Caco-2 (cell line): ENCODE measurements at regions of chr6 and their contacts with region 1.

Region 1: GRCh38 chr6:3419624-3420272 is 37.1 kb downstream of the SLC22A23 start:
- DNase-seq: peak; percentile 69
- H3K4me3 ChIP-seq: no peak overlapping the region
- H3K4me3 Mint-ChIP-seq: peak overlapping the region; percentile 63
- H3K27ac Mint-ChIP-seq: peak overlapping the region; percentile 98
- H3K4me1 ChIP-seq: peaks cover 84% of the 10 kb centered on the region
- H3K4me1 Mint-ChIP-seq: peaks cover 61% of the 10 kb centered on the region
- H3K27me3 ChIP-seq: no peaks in the 10 kb centered on the region
- H3K27me3 Mint-ChIP-seq: no peaks in the 10 kb centered on the region
- CTCF ChIP-seq: no peak

Region 2: GRCh38 chr6:3363296-3364025 is 56.3 kb before region 1 on chr6:
- CTCF ChIA-PET with region 1: no interaction called
- POLR2A ChIA-PET with region 1: no interaction called
- intact Hi-C with region 1: no loop called
- DNase-seq: no peak
- H3K4me3 ChIP-seq: no peak overlapping the region
- H3K4me3 Mint-ChIP-seq: no peak overlapping the region
- H3K27ac Mint-ChIP-seq: peak overlapping the region; percentile 39
- H3K4me1 ChIP-seq: peaks cover 12% of the 10 kb centered on the region; the same call in 1 of the 2 replicates
- H3K4me1 Mint-ChIP-seq: peaks cover 19% of the 10 kb centered on the region
- H3K27me3 ChIP-seq: no peaks in the 10 kb centered on the region
- H3K27me3 Mint-ChIP-seq: no peaks in the 10 kb centered on the region
- CTCF ChIP-seq: no peak

Region 3: GRCh38 chr6:3403238-3404173 is 16.2 kb before region 1 on chr6:
- CTCF ChIA-PET with region 1: interaction called, 5 read pairs
- POLR2A ChIA-PET with region 1: interaction called, 7 read pairs
- intact Hi-C with region 1: loop called (anchors 1 kb)
- DNase-seq: peak; percentile 92 to 95
- H3K4me3 ChIP-seq: no peak overlapping the region
- H3K4me3 Mint-ChIP-seq: peak overlapping the region; percentile 63
- H3K27ac Mint-ChIP-seq: peak overlapping the region; percentile 88
- H3K4me1 ChIP-seq: peaks cover 90% of the 10 kb centered on the region
- H3K4me1 Mint-ChIP-seq: peaks cover 63% of the 10 kb centered on the region
- H3K27me3 ChIP-seq: no peaks in the 10 kb centered on the region
- H3K27me3 Mint-ChIP-seq: no peaks in the 10 kb centered on the region
- CTCF ChIP-seq: no peak

Region 4: DNA sequence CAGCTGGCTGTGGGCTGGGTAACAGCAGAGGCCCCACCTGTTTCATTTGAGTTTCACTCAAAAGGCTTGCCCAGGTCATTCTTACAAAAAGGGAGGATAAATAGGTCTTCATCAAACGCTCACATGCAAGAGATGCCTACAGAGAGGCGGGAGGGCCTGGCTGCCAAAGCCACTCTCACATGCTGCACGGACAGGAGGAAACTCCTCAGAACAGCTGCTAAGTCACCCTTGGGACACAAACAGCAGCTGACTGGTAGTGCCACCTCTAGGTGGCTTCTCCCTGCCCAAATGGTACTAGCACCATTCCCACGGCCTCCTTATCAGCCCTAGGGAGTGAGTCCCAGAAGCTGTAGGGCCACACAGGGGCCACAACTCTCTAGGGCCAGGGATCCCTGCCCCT is 13.3 kb after region 1 on chr6:
- CTCF ChIA-PET with region 1: no interaction called
- POLR2A ChIA-PET with region 1: no interaction called
- intact Hi-C with region 1: no loop called
- DNase-seq: no peak
- H3K4me3 ChIP-seq: no peak overlapping the region
- H3K4me3 Mint-ChIP-seq: no peak overlapping the region
- H3K27ac Mint-ChIP-seq: peak overlapping the region; percentile 8
- H3K4me1 ChIP-seq: peaks cover 4% of the 10 kb centered on the region; the same call in 1 of the 2 replicates
- H3K4me1 Mint-ChIP-seq: peaks cover 10% of the 10 kb centered on the region
- H3K27me3 ChIP-seq: no peaks in the 10 kb centered on the region
- H3K27me3 Mint-ChIP-seq: no peaks in the 10 kb centered on the region
- CTCF ChIP-seq: no peak